ENCODE measurements at regions of chr11 and their contacts with region 1.

Region 1: DNA sequence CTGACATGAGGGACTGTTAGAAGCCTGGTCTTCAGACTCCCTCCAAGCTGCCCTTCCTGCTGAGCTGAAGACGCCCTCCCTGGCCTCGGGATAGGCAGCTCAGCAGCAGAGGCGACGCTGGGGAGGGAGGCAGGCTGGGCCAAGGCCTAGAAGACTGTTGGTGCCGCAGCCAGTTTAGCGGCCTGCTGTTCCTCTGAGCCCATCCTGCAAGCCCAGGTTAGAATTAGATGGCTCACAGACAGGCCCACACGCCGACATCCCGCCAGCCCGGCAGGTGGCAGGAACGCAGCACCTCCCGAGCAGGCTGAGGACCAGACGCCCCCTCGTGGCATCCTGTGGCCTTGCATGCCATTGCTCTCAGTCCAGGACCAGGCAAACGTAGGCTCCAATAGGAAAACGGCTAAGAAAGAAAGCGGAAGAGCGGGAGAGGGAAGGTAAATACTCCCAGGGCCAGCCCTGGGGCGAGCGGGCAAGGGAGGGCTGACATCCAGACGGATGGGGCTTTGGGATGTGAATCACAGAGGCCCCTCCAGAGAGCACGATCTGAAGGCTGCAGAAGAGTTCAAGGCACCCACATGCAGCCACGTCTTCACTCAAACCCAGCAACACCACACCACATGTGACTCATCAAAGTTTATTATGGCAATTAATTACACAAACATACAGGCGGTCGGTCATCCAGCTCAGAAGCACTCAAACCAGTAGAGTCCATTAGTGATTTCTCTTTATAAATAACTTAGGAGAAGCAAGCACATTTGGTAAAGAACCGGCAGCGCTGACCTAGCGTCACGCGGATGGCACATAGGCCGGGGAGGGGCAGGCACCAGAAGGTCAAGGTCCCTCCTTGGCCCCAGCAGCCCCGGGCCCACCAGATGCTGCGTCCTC is 27.6 kb downstream of the CD5 start:
- DNase-seq: peak; percentile 74 to 92
- H3K4me3 ChIP-seq: peak overlapping the region in 2 of 3 donors; percentile 19 to 42
- H3K27ac ChIP-seq: peak overlapping the region; percentile 37 to 74
- H3K4me1 ChIP-seq: peaks cover 0 to 4% of the 10 kb centered on the region in 2 donors
- H3K27me3 ChIP-seq: no peaks in the 10 kb centered on the region
- CTCF ChIP-seq: peak; percentile 91 to 100 (median 99)
- POLR2A ChIP-seq: no peak

Region 2: DNA sequence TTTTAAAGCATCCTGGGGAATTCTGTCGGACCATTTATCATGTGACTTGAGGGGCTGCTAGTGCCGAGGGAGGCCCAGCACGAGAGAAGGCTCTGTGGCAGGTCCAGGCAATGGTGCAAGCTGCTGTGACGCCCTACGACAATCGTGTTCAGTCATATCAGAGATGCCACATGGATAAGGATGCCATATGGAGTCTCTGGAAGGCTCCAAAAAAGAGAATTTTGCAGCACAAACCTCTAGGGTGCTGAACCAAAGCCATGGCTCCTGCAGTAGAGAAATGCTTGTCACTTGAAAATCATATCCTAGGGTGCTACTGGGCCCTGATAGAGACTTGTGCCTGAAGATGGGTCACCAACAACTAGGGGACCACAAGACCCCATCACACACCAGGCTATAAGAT is 165.1 kb before region 1 on chr11:
- intact Hi-C with region 1: loop called (anchors 10 kb)
- DNase-seq: no peak
- H3K4me3 ChIP-seq: no peak overlapping the region
- H3K27ac ChIP-seq: no peak overlapping the region
- H3K4me1 ChIP-seq: no peaks in the 10 kb centered on the region
- H3K27me3 ChIP-seq: no peaks in the 10 kb centered on the region
- CTCF ChIP-seq: no peak
- POLR2A ChIP-seq: no peak

Region 3: DNA sequence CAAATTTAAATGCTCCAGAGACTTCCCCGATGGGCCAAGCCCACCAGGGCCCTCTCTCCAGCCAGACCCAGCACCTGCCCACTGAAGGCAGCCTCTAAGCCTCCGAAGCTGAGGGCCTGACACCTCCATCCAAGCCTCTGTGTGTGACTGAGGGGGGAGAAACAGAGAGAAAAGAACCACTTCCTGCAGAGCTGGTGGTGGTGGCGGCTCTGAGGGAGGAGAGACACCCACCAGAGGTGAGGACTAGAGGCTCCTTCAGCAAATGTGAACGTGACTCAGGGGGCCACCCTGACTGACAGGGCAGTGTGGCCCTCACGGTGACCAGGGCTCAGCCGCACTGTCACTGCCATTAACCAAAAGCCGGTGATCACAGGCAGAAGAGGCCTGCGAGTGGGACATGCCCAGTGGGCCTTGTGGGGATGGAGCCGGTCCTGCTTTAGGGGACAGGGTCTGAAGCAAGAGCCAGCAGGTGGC is 58.6 kb before region 1 on chr11:
- intact Hi-C with region 1: no loop called
- DNase-seq: no peak
- H3K4me3 ChIP-seq: no peak overlapping the region
- H3K27ac ChIP-seq: peak overlapping the region in 1 of 2 donors; percentile 70
- H3K4me1 ChIP-seq: no peaks in the 10 kb centered on the region
- H3K27me3 ChIP-seq: no peaks in the 10 kb centered on the region
- CTCF ChIP-seq: no peak
- POLR2A ChIP-seq: no peak

Region 4: GRCh38 chr11:61816736-61817455 is 687.0 kb after region 1 on chr11 and contains the start of gene FADS1:
- intact Hi-C with region 1: no loop called
- DNase-seq: peak in 1 of 2 donors; percentile 39
- H3K4me3 ChIP-seq: peak within 1 kb of the TSS; percentile 67 to 92 (median 69)
- H3K27ac ChIP-seq: peak within 1 kb of the TSS; percentile 78 to 98
- H3K4me1 ChIP-seq: peaks cover 0 to 6% of the 10 kb centered on the region in 2 donors
- H3K27me3 ChIP-seq: no peaks in the 10 kb centered on the region
- CTCF ChIP-seq: peak in 1 of 3 donors; percentile 15
- POLR2A ChIP-seq: no peak
- total RNA-seq, gene FADS1: 8.8 to 112 (median 15.1) TPM

Measured in breast epithelium (tissue), 4 donors.